ENCODE measurements at regions of chr9 and their contacts with region 1.

Region 1: DNA sequence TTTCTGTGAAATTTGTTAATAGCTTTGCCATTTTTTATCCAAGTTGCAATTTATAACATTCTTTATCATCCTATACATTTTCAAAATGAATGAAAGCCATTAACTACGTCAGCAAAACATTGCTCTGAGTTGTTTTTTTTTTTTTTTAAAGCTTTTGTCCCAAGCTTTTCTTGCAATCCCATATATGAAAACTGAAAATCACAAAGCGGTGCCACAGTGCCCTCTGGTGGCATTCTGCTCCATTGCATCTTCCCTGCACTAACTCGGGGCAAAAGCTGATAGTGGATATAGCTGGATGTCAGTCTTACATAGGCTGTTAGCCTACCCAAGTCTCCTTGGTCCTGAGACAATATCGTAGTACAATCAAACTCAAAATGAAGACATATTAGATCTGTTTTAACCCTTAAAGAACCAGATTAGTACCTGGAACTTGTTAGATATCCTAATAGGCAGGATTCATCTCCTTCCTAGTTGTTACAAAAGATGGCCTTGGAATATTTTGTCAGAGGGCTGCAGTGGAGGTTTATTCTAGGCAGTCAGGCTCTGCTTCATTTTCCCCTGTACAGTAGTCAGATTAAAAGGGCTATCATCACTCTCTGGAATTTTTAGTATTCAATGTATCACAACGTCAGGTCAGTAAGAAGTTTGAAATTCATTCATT is 669.9 kb downstream of the PTPRD start:
- DNase-seq: peak; percentile 8
- H3K4me3 ChIP-seq: no peak overlapping the region
- H3K27ac ChIP-seq: no peak overlapping the region
- H3K27me3 ChIP-seq: no peaks in the 10 kb centered on the region
- CTCF ChIP-seq: peak; percentile 90

Region 2: DNA sequence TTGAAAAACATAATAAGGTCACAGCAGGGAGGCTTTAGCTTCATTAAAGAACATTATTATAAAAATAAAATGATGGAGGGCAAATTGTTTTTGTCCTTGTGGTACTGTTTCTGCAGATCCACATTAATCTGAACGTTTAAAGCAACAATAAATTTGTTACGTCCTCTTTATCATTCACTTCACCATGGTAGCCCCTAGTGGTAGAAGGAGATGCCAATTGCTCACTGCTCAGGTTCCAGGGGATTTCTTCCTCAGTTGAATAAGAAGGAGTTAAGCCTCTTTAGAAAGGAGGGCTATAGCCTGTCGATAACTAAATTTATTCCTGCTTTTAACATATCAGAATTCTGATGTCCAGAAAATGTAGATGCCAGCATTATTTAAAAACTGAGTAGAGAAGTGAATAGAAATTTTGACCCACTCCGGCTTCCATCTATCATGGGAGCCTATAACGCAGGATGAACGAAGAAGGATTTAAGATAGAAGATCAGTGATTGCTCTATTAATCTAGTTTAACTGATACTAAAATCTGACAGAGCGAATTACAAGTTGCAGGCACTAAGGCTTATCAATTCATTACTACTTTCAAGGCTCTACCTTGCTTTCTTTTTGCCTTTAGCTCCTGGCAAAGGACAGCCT is 22.4 kb before region 1 on chr9:
- CTCF ChIA-PET with region 1: interaction called, 12 read pairs
- POLR2A ChIA-PET with region 1: interaction called, 3 read pairs
- DNase-seq: no peak
- H3K4me3 ChIP-seq: no peak overlapping the region
- H3K27ac ChIP-seq: no peak overlapping the region
- H3K27me3 ChIP-seq: no peaks in the 10 kb centered on the region
- CTCF ChIP-seq: no peak

Region 3: DNA sequence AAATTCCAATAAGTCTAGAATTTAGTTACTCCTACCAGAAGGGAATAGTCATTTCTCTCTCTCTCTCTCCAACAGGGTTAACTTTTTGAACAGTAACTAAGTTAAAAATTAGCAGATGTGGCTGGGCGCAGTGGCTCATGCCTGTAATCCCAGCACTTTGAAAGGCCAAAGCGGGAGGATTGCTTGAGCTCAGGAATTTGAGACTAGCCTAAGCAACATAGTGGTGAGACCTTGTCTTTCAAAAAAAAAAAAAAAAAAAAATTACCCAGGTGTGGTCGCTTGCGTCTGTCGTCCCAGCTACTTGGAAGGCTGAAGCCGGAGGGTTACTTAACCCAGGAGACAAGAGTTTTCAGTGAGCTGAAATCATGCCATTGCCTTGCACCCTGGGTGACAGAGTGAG is 30.2 kb after region 1 on chr9:
- CTCF ChIA-PET with region 1: interaction called, 14 read pairs
- POLR2A ChIA-PET with region 1: no interaction called
- DNase-seq: no peak
- H3K4me3 ChIP-seq: no peak overlapping the region
- H3K27ac ChIP-seq: no peak overlapping the region
- H3K27me3 ChIP-seq: no peaks in the 10 kb centered on the region
- CTCF ChIP-seq: no peak

Measured in AG04450 (cell line).